GM23248 (cell line): ENCODE measurements at regions of chr1 and their contacts with region 1.

Region 1: DNA sequence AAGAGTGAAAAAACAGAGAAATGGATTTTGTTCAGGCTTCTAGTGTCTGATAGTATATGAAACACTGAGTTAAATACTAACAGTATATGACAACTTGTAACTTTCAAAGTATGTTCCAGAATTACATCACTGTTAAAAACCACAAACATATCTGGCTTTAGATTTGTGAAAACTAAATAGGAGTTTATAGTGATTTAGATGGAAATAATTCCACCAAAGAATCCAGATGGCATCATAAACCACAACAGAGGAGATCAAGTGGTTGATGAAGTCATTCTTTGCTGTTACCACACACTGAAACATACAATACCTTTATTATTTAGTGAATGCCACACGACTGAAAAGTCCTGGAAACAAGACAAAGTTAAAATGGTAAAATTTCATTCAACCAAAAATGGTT is 37.2 kb downstream of the ALG14 start:
- DNase-seq: peak; percentile 93
- H3K4me3 ChIP-seq: no peak overlapping the region
- H3K27ac ChIP-seq: peak overlapping the region; percentile 68
- H3K4me1 ChIP-seq: peaks cover 19% of the 10 kb centered on the region
- H3K27me3 ChIP-seq: no peaks in the 10 kb centered on the region

Region 2: GRCh38 chr1:94522304-94522703 is 513.2 kb before region 1 on chr1:
- in situ Hi-C with region 1: loop called (anchors 10 kb)
- DNase-seq: peak; percentile 83
- H3K4me3 ChIP-seq: no peak overlapping the region
- H3K27ac ChIP-seq: no peak overlapping the region
- H3K4me1 ChIP-seq: peaks cover 20% of the 10 kb centered on the region
- H3K27me3 ChIP-seq: no peaks in the 10 kb centered on the region

Region 3: GRCh38 chr1:94622757-94623156 is 412.8 kb before region 1 on chr1:
- in situ Hi-C with region 1: no loop called
- DNase-seq: peak; percentile 53
- H3K4me3 ChIP-seq: no peak overlapping the region
- H3K27ac ChIP-seq: no peak overlapping the region
- H3K4me1 ChIP-seq: peaks cover 25% of the 10 kb centered on the region
- H3K27me3 ChIP-seq: no peaks in the 10 kb centered on the region

Region 4: DNA sequence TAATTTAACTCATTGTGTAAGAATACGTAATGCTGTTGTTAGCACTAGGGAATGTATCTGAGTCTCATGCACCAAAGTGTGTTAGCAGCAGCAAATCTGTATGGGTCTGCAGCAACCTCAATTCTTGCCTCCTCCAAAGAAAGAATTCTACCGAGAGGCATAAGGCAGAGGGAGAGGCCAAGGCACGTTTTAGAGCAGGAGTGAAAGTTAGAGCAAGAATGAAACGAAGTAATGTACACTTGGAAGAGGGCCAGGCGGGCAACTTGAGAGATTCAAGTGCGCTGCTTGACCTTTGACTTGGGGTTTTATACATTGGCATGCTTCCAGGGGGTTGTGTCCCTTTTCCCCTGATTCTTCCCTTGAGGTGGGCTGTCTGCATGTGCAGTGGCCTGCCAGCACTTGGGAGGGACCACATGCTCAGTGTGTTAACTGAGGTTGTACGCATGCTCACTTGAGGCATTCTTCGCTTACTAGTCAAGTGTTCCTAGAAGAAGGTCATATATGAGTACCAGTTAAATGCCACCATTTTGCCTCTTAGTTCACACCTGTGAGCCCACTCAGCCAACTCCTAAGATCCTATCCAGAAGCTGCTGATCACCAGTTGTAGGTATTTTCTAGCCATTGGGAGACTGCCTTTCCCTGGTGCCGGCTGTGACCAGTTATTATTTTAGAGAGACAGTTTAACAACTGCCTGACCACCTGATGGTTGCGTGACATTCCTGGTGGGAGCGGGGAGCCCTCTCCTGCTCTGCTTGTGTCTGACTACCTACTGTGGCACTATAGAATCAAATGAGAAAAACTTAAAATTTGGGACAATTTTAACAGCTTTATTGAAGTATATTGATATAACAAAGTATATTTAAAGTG is 106.0 kb before region 1 on chr1:
- in situ Hi-C with region 1: loop called (anchors 10 kb)
- DNase-seq: no peak
- H3K4me3 ChIP-seq: no peak overlapping the region
- H3K27ac ChIP-seq: no peak overlapping the region
- H3K4me1 ChIP-seq: peaks cover 5% of the 10 kb centered on the region; the same call in 1 of the 2 replicates
- H3K27me3 ChIP-seq: no peaks in the 10 kb centered on the region